Activated naive CD8-positive, alpha-beta T cell treated with anti-CD3 and anti-CD28 coated beads, Interleukin-2, amount 10 ng/mL, durations not matched to agents 7 days and 5 days (primary cell): ENCODE measurements at regions of chr7 and their contacts with region 1.

Region 1: GRCh38 chr7:21945454-21946227 is at the start of gene CDCA7L:
- DNase-seq: peak; percentile 85
- ATAC-seq: peak; percentile 87
- H3K4me3 Mint-ChIP-seq: peak within 1 kb of the TSS; percentile 95
- H3K27ac Mint-ChIP-seq: peak within 1 kb of the TSS; percentile 94
- H3K4me1 Mint-ChIP-seq: peaks cover 56% of the 10 kb centered on the region
- H3K27me3 Mint-ChIP-seq: peaks cover 9% of the 10 kb centered on the region
- total RNA-seq, gene CDCA7L: 51.9 to 60.7 TPM

Region 2: GRCh38 chr7:21883069-21883468 is 62.6 kb before region 1 on chr7:
- POLR2A ChIA-PET with region 1: no interaction called
- DNase-seq: no peak
- ATAC-seq: no peak
- H3K4me3 Mint-ChIP-seq: no peak overlapping the region
- H3K27ac Mint-ChIP-seq: no peak overlapping the region
- H3K4me1 Mint-ChIP-seq: no peaks in the 10 kb centered on the region
- H3K27me3 Mint-ChIP-seq: no peaks in the 10 kb centered on the region

Region 3: GRCh38 chr7:21898265-21898930 is 47.2 kb before region 1 on chr7:
- POLR2A ChIA-PET with region 1: interaction called, 17 read pairs
- DNase-seq: peak; percentile 31
- ATAC-seq: peak; percentile 89
- H3K4me3 Mint-ChIP-seq: peak overlapping the region; percentile 85
- H3K27ac Mint-ChIP-seq: peak overlapping the region; percentile 97
- H3K4me1 Mint-ChIP-seq: peaks cover 18% of the 10 kb centered on the region
- H3K27me3 Mint-ChIP-seq: no peaks in the 10 kb centered on the region

Region 4: GRCh38 chr7:21967598-21968003 is 22.0 kb after region 1 on chr7:
- POLR2A ChIA-PET with region 1: interaction called, 12 read pairs
- DNase-seq: peak; percentile 37
- ATAC-seq: peak; percentile 83
- H3K4me3 Mint-ChIP-seq: peak overlapping the region; percentile 47
- H3K27ac Mint-ChIP-seq: peak overlapping the region; percentile 28
- H3K4me1 Mint-ChIP-seq: peaks cover 7% of the 10 kb centered on the region
- H3K27me3 Mint-ChIP-seq: peaks cover 11% of the 10 kb centered on the region